Mammary epithelial cell (primary cell): ENCODE measurements at regions of chr7 and their contacts with region 1.

Region 1: GRCh38 chr7:98400542-98401340 is at the start of gene BAIAP2L1:
- DNase-seq: peak; percentile 92
- H3K4me3 ChIP-seq: peak within 1 kb of the TSS; percentile 80 to 96 (median 88)
- H3K27ac ChIP-seq: peak within 1 kb of the TSS; percentile 95
- H3K4me1 ChIP-seq: peaks cover 14% of the 10 kb centered on the region
- H3K27me3 ChIP-seq: no peaks in the 10 kb centered on the region
- CTCF ChIP-seq: no peak
- total RNA-seq, gene BAIAP2L1: 39.0 to 65.0 TPM

Region 2: GRCh38 chr7:97818066-97818663 is 582.6 kb before region 1 on chr7:
- CTCF ChIA-PET with region 1: no interaction called
- dilution Hi-C with region 1: no loop called
- in situ Hi-C with region 1: no loop called
- intact Hi-C with region 1: no loop called
- DNase-seq: no peak
- H3K4me3 ChIP-seq: no peak overlapping the region
- H3K27ac ChIP-seq: no peak overlapping the region
- H3K4me1 ChIP-seq: no peaks in the 10 kb centered on the region
- H3K27me3 ChIP-seq: no peaks in the 10 kb centered on the region
- CTCF ChIP-seq: no peak

Region 3: DNA sequence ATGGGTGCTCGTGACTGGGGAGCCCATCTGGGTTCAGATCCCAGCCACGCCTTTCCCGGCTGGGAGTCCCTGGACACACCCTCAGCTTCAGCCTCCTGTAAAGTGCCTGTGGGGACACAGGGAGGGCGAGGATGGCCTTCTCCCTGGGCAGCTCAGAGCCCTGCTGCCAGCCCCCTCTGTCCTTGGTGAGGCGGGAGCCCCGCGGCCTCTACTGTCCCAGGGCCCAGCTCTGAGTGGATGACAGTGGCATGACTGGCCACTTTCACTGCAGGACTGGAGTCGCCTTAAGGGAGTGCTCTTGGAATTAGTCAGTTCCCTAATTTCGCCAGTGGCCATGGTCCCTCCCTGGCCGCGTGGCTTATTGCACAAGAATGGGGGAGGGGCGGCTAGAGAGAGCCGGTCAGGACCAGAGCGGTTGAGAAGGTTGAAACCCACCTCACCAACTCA is 114.6 kb before region 1 on chr7:
- CTCF ChIA-PET with region 1: interaction called, 4 read pairs
- dilution Hi-C with region 1: loop called (anchors 10 kb)
- in situ Hi-C with region 1: loop called (anchors 10 kb)
- intact Hi-C with region 1: loop called (anchors 2 kb)
- DNase-seq: peak; percentile 73
- H3K4me3 ChIP-seq: no peak overlapping the region
- H3K27ac ChIP-seq: peak overlapping the region; percentile 26
- H3K4me1 ChIP-seq: peaks cover 65% of the 10 kb centered on the region
- H3K27me3 ChIP-seq: no peaks in the 10 kb centered on the region
- CTCF ChIP-seq: no peak

Region 4: DNA sequence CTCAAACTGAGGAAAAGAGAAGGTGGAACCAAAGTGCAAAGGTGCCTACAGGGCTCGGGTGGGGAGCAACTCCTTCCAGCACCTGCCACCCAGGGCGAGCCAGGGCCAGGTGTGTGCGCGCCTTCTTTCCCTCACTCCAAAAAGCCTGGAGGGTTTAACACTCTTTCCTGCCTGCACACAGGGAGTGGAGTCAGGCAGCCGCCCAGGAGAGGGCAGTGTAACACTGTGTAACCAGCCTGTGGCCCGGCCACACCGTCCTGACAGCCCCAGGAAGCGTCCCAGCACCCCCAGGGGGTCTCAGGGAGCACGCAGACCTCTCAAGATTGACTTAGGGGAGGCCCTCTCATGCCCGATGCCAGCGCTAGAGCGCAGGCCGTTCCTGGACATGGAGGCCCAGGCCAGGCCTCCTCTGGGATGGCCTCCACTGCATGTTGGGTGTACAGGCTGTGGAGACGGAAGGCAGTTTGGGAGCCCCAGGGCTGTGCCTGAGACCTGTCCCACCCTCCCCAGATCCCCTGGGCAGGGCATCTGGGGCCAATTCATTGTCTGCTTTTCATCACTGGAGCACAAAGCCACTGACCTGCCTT is 105.9 kb before region 1 on chr7:
- CTCF ChIA-PET with region 1: no interaction called
- dilution Hi-C with region 1: loop called (anchors 10 kb)
- in situ Hi-C with region 1: loop called (anchors 10 kb)
- intact Hi-C with region 1: loop called (anchors 1 kb)
- DNase-seq: peak; percentile 54
- H3K4me3 ChIP-seq: no peak overlapping the region
- H3K27ac ChIP-seq: no peak overlapping the region
- H3K4me1 ChIP-seq: no peaks in the 10 kb centered on the region
- H3K27me3 ChIP-seq: no peaks in the 10 kb centered on the region
- CTCF ChIP-seq: peak; percentile 61 to 77

Region 5: GRCh38 chr7:98314469-98314868 is 86.3 kb before region 1 on chr7:
- CTCF ChIA-PET with region 1: no interaction called
- dilution Hi-C with region 1: no loop called
- in situ Hi-C with region 1: no loop called
- intact Hi-C with region 1: loop called (anchors 5 kb)
- DNase-seq: no peak
- H3K4me3 ChIP-seq: no peak overlapping the region
- H3K27ac ChIP-seq: no peak overlapping the region
- H3K4me1 ChIP-seq: peaks cover 3% of the 10 kb centered on the region
- H3K27me3 ChIP-seq: no peaks in the 10 kb centered on the region
- CTCF ChIP-seq: no peak

Region 6: DNA sequence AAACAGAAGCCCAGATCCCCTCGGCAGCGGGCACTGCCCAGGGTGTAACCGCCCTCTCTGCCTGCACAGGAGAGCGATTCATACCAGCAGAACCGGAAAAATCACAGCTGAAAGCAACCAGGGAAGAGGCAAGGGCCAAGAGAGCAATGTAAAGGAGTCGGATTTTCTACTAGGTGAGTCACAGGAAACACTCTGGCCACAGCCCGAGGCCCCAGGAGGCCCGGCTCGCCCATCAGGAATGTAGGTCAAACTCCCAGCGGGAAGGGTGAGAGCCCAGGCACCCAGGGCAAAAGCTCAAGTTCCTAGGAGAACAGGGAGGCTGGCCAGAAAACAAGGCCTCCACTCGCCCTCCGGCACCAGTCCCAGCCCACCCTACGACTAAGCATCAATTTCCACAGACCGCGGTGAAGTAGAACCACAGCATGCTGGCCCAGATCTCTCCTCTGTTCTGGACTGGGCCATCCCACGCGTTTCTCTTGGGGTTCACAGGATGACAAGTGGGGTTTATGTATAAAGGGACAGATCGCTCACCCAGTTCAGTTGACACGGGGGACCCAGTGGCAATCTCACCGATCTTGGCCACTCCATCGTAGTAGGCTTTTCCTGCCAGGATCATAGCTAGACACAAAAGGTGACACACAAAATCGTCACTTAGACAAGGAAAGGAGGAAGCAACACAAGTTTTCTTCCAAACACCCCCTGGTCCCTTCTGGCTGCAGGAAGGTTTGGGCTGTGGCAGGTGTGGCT is 46.1 kb before region 1 on chr7:
- CTCF ChIA-PET with region 1: no interaction called
- dilution Hi-C with region 1: no loop called
- in situ Hi-C with region 1: no loop called
- intact Hi-C with region 1: loop called (anchors 1 kb)
- DNase-seq: peak; percentile 93
- H3K4me3 ChIP-seq: peak overlapping the region in 2 of 3 experiments; percentile 4 to 22
- H3K27ac ChIP-seq: peak overlapping the region; percentile 88
- H3K4me1 ChIP-seq: peaks cover 31% of the 10 kb centered on the region
- H3K27me3 ChIP-seq: no peaks in the 10 kb centered on the region
- CTCF ChIP-seq: no peak

Region 7: GRCh38 chr7:98360221-98361124 is 40.3 kb before region 1 on chr7:
- CTCF ChIA-PET with region 1: interaction called, 10 read pairs
- dilution Hi-C with region 1: no loop called
- in situ Hi-C with region 1: no loop called
- intact Hi-C with region 1: no loop called
- DNase-seq: no peak
- H3K4me3 ChIP-seq: no peak overlapping the region
- H3K27ac ChIP-seq: no peak overlapping the region
- H3K4me1 ChIP-seq: peaks cover 3% of the 10 kb centered on the region
- H3K27me3 ChIP-seq: no peaks in the 10 kb centered on the region
- CTCF ChIP-seq: no peak

Region 8: DNA sequence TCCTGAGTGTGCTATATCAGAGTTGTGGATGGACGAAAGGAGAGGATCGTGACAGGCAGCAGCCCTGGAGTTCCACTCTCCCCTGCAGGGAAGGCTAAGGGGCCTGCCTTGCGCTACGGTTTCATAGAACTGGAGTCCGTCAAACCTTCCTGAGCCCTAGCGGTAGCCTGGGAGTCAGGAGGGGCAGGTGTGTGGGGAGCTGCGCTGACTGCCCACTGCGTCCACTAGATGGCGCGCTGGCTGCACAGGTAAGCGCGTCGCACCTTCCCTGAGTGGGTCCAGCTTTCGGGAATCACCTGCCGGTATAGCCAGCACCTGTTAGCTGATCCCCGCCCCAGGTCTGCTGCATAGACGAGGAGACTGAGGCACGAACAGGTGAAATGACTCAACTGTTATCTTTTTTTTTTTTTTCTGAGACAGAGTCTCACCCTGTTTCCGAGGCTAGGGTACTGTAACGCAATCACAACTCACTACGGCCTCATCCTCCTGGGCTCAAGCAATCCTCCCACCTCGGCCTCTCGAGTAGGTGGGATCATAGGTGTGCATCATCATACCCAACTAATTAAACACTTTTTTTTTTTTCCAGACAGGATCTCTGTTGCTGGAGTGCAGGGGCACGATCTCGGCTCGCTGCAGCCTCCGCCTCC is 20.3 kb after region 1 on chr7:
- CTCF ChIA-PET with region 1: no interaction called
- dilution Hi-C with region 1: no loop called
- in situ Hi-C with region 1: no loop called
- intact Hi-C with region 1: loop called (anchors 1 kb)
- DNase-seq: peak; percentile 75
- H3K4me3 ChIP-seq: no peak overlapping the region
- H3K27ac ChIP-seq: no peak overlapping the region
- H3K4me1 ChIP-seq: peaks cover 31% of the 10 kb centered on the region
- H3K27me3 ChIP-seq: no peaks in the 10 kb centered on the region
- CTCF ChIP-seq: peak; percentile 99 to 100